ENCODE measurements at regions of chr5 and their contacts with region 1.

Region 1: GRCh38 chr5:149434162-149435014 is 55.3 kb upstream of the IL17B start:
- DNase-seq: peak in 8 of 9 experiments; percentile 17 to 66 (median 50)
- ATAC-seq: no peak
- H3K4me3 ChIP-seq: no peak overlapping the region
- H3K4me3 Mint-ChIP-seq: no peak overlapping the region
- H3K27ac ChIP-seq: no peak overlapping the region
- H3K27ac Mint-ChIP-seq: no peak overlapping the region
- H3K4me1 ChIP-seq: peaks cover 5% of the 10 kb centered on the region
- H3K4me1 Mint-ChIP-seq: peaks cover 7% of the 10 kb centered on the region
- H3K27me3 ChIP-seq: no peaks in the 10 kb centered on the region
- H3K27me3 Mint-ChIP-seq: peaks cover 2% of the 10 kb centered on the region
- CTCF ChIP-seq: peak; percentile 74

Region 2: DNA sequence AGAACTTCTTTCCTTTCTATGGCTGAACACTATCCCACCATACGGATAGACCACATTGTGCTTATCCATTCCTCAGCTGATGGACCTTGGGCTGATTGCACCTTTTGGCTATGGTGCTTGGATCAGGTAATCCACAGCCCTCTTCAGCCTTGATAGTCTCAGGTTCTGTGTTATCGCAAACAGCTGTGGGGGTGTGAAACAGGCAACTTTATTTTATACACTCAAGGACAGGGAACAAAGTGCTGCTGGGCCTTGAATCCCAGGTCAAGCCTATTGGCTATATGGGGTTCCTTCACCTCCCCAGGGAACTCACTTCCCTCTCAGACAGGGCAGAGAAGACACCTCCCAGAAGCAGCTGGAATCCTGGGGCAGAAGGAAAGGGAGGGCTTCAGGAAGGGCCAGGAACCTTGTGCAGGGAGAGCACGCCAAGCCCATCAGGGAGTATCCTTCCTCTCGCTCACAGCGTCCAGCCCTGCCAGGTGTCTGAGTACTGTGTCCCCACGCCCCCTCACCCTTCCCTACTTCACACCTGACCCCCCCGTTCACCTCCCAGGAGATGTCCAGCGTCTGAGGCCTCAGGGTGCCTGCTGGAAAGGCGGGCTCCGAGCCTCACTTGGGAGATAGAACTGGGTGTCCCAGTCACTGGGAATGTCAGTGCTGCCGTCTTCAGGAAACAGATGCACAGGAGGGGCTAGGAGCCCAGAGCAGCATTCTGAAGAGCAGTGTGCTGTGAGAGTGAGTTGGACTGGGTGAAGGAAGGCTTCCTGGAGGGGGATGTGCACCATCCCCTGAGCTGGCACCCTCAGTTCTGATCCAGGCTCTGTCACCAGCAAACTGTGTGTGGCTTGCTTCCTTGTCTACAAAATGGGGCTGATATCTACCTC is 130.0 kb before region 1 on chr5:
- CTCF ChIA-PET with region 1: interaction called, 10 read pairs
- POLR2A ChIA-PET with region 1: no interaction called
- intact Hi-C with region 1: no loop called
- DNase-seq: no peak
- ATAC-seq: no peak
- H3K4me3 ChIP-seq: no peak overlapping the region
- H3K4me3 Mint-ChIP-seq: no peak overlapping the region
- H3K27ac ChIP-seq: no peak overlapping the region
- H3K27ac Mint-ChIP-seq: no peak overlapping the region
- H3K4me1 ChIP-seq: peaks cover under 1% of the 10 kb centered on the region
- H3K4me1 Mint-ChIP-seq: peaks cover 3% of the 10 kb centered on the region
- H3K27me3 ChIP-seq: peaks cover 0 to 2% of the 10 kb centered on the region in 2 experiments
- H3K27me3 Mint-ChIP-seq: peaks cover 2% of the 10 kb centered on the region
- CTCF ChIP-seq: no peak

Region 3: DNA sequence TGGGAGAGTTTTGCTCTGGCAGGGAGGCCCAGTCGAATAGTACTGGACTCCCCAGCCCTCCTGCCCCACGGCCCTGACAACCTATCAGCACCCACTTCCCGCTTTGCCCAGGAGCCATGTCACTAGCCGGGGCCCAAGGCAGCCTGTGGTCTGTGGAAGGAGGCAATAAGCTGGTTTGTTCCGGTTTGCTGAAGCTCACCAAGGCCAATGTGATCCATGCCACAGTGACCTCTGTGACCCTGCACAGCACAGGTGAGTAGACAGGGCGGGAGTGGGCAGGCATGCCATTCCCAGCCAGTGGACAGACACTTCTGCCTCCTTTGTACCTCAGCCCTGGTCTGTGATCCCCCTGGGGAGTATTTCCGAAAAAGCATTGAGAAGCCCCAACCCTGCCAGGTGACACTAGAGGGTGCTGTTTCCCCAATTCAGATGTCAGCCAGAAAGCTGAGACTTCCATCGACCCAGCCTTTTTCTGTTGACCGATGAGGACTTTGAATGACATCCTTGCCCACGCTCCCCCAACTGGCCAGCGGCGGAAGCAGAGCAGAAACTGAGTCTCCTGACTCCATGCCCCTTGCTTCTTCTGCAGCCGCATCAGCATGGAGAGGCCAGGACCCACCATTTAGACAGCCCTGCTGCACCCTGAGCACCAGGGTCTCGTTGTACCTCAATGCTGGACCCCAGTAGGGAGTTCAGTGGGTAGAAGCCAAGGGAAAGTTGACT is 67.0 kb before region 1 on chr5:
- CTCF ChIA-PET with region 1: interaction called, 14 read pairs
- POLR2A ChIA-PET with region 1: no interaction called
- intact Hi-C with region 1: loop called in 1 of 2 experiments (anchors 5 kb)
- DNase-seq: peak; percentile 31 to 70 (median 59)
- ATAC-seq: peak; percentile 67
- H3K4me3 ChIP-seq: no peak overlapping the region
- H3K4me3 Mint-ChIP-seq: no peak overlapping the region
- H3K27ac ChIP-seq: no peak overlapping the region
- H3K27ac Mint-ChIP-seq: peak overlapping the region; percentile 41
- H3K4me1 ChIP-seq: peaks cover 8% of the 10 kb centered on the region
- H3K4me1 Mint-ChIP-seq: peaks cover 24% of the 10 kb centered on the region
- H3K27me3 ChIP-seq: no peaks in the 10 kb centered on the region
- H3K27me3 Mint-ChIP-seq: no peaks in the 10 kb centered on the region
- CTCF ChIP-seq: peak; percentile 57

Region 4: DNA sequence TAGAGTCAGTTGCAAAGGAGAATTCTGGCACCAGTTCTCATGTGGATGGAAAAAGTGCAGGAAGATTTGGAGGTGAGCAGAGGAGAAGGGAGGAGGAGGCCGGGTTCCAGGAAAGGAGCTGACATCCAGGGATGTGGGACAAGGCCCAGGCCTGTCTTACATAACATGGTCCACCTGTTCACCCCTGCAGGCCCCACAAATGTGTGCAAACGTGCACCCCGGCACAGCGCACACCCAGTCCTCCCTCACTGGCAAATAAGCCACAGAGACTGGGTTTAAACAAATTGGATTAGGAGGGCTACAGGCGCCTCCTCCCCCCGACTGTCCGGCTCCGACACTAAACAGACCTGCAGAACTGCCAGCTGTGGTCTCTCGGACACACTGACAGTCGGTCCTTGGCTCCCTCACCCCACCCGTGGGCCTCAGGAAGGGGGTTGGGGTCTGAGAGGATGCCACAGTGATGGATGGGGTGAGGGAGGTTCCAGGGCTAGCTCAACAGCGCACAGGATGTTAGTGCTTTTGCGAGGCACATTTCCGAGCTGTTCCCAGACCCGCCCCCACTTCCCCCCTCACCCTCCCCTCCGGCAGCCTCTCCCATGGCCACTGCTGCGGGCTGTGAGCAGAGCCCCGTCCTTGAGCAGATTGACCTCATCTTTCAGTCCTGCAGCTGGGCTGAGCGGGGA is 11.9 kb before region 1 on chr5:
- CTCF ChIA-PET with region 1: interaction called, 21 read pairs
- POLR2A ChIA-PET with region 1: no interaction called
- intact Hi-C with region 1: no loop called
- DNase-seq: no peak
- ATAC-seq: no peak
- H3K4me3 ChIP-seq: no peak overlapping the region
- H3K4me3 Mint-ChIP-seq: no peak overlapping the region
- H3K27ac ChIP-seq: no peak overlapping the region
- H3K27ac Mint-ChIP-seq: no peak overlapping the region
- H3K4me1 ChIP-seq: peaks cover 4% of the 10 kb centered on the region
- H3K4me1 Mint-ChIP-seq: peaks cover 4% of the 10 kb centered on the region
- H3K27me3 ChIP-seq: no peaks in the 10 kb centered on the region
- H3K27me3 Mint-ChIP-seq: peaks cover 11% of the 10 kb centered on the region
- CTCF ChIP-seq: no peak

Region 5: DNA sequence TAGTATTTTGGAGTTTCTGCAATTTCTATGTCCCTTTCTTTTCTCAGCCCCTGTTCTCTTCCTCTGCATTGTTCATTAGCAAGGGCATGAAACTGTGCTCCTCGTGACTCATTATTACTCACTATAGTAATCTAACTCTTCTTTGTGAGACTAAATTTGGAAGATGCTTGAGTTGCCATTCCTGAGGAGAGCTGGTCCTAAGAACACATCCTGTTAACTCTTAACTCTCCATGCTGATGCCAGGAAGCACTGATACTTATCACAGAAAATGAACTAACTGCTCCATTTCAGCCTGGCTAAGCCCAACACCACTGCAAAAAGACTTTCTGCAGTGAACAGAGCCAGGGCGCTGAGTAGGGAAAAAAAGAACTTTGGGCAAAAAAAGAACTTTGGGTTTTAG is 127.5 kb after region 1 on chr5:
- CTCF ChIA-PET with region 1: interaction called, 69 read pairs
- POLR2A ChIA-PET with region 1: no interaction called
- intact Hi-C with region 1: loop called (anchors 2 kb)
- DNase-seq: no peak
- ATAC-seq: no peak
- H3K4me3 ChIP-seq: no peak overlapping the region
- H3K4me3 Mint-ChIP-seq: no peak overlapping the region
- H3K27ac ChIP-seq: no peak overlapping the region
- H3K27ac Mint-ChIP-seq: no peak overlapping the region
- H3K4me1 ChIP-seq: peaks cover 4% of the 10 kb centered on the region
- H3K4me1 Mint-ChIP-seq: peaks cover 17% of the 10 kb centered on the region
- H3K27me3 ChIP-seq: no peaks in the 10 kb centered on the region
- H3K27me3 Mint-ChIP-seq: no peaks in the 10 kb centered on the region
- CTCF ChIP-seq: no peak